Heart left ventricle (tissue), 16 donors: ENCODE measurements at regions of chr11 and their contacts with region 1.

Region 1: GRCh38 chr11:30960387-30960992 is 374.3 kb upstream of the MPPED2 start:
- DNase-seq: no peak
- ATAC-seq: no peak
- H3K4me3 ChIP-seq: no peak overlapping the region
- H3K27ac ChIP-seq: no peak overlapping the region
- H3K4me1 ChIP-seq: no peaks in the 10 kb centered on the region
- H3K27me3 ChIP-seq: no peaks in the 10 kb centered on the region
- CTCF ChIP-seq: peak; percentile 24 to 62 (median 50)
- POLR2A ChIP-seq: no peak

Region 2: GRCh38 chr11:31045335-31045734 is 84.8 kb after region 1 on chr11:
- intact Hi-C with region 1: loop called in 9 of 10 experiments (anchors 1 to 10 kb)
- DNase-seq: no peak
- ATAC-seq: no peak
- H3K4me3 ChIP-seq: no peak overlapping the region
- H3K27ac ChIP-seq: no peak overlapping the region
- H3K4me1 ChIP-seq: no peaks in the 10 kb centered on the region
- H3K27me3 ChIP-seq: no peaks in the 10 kb centered on the region
- CTCF ChIP-seq: peak in 9 of 12 donors; percentile 16 to 38 (median 30)
- POLR2A ChIP-seq: no peak